Activated B cell treated with CpG ODN at 0.5 μM for 24 hours (primary cell): ENCODE measurements at regions of chr1 and their contacts with region 1.

Region 1: DNA sequence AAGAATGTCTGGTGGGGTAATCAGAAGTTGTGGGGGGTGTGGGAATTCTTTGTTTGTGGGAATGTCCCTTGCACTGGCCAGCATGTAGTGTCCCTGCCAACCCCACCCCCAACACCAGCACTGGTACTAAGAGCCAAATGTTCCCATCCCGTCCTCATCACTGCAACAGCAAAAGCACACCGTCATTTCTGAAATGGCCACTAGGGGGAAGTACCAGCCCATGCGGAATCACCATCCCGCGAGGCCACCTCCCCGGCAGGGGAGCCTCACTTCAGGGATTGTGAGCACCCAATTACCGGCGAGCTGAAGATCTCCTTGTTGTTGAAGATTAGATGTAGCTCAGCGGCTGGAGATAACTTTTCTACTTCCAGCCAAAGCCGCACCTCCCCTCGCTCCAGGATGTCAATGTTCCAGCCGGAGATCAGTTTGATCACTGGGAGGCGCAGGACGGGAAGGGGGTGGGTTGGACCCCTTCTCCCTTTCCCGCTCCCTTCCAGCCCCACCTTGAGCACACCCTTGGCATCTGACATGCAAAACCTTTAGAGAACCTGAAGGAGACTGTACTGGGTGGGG is 41.0 kb downstream of the MYOM3 start:
- DNase-seq: peak; percentile 51
- ATAC-seq: peak; percentile 96
- H3K4me3 Mint-ChIP-seq: no peak overlapping the region
- H3K27ac Mint-ChIP-seq: no peak overlapping the region
- H3K4me1 Mint-ChIP-seq: no peaks in the 10 kb centered on the region
- H3K27me3 Mint-ChIP-seq: peaks cover 2% of the 10 kb centered on the region
- CTCF ChIP-seq: peak; percentile 85

Region 2: GRCh38 chr1:24119859-24120756 is 49.2 kb after region 1 on chr1:
- CTCF ChIA-PET with region 1: no interaction called
- POLR2A ChIA-PET with region 1: no interaction called
- intact Hi-C with region 1: loop called (anchors 1 kb)
- DNase-seq: no peak
- ATAC-seq: no peak
- H3K4me3 Mint-ChIP-seq: no peak overlapping the region
- H3K27ac Mint-ChIP-seq: no peak overlapping the region
- H3K4me1 Mint-ChIP-seq: no peaks in the 10 kb centered on the region
- H3K27me3 Mint-ChIP-seq: peaks cover 28% of the 10 kb centered on the region
- CTCF ChIP-seq: no peak